IMR-90 (cell line): ENCODE measurements at regions of chr1 and their contacts with region 1.

Region 1: DNA sequence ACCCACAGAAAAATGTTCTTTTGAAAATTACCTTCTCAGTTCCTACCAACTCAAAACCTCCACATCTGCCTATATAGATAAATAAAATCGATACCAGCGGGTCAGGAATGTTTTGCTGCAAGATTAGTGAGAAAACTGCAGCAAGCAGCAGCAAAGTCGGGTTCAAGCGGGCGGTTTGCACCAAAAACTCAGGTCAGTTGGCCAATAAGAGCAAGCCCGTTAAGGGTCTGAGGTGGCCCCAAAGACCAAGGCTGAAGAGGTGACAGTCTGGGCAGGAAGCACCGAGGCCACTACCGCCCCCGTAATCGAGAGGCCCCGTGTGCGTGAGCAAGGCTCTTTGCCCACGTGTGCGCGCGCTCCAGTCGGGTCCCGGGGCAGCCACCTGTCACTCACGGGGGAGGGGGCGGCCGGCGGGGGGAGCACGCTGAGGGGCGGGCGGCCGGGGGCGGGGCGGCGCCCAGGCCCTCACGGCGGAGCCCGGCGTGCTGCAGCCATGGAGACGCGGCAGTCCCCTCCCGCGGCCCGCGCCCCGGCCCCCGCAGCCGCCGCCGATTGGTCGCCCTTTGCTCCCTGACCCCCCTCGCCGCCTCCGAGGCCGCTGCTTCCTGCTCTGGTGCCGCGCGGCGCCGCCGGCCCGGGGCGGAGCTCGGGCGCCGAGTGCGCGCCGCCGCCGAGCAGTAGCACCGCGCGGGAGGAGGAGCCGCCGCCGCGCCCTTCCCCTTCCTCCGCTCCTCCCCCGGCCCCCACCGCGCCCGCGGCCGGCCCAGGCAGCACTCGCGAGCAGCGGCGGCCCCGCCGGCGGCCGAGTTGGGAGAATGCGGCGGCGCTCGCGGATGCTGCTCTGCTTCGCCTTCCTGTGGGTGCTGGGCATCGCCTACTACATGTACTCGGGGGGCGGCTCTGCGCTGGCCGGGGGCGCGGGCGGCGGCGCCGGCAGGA is at the start of gene GALNT2:
- DNase-seq: peak; percentile 79
- ATAC-seq: peak; percentile 93
- H3K4me3 ChIP-seq: peak within 1 kb of the TSS; percentile 81
- H3K27ac ChIP-seq: peak within 1 kb of the TSS; percentile 78
- H3K4me1 ChIP-seq: peaks cover 7% of the 10 kb centered on the region
- H3K27me3 ChIP-seq: no peaks in the 10 kb centered on the region
- CTCF ChIP-seq: no peak
- POLR2A ChIP-seq: peak; percentile 87
- RAD21 ChIP-seq: peak; percentile 37
- total RNA-seq, gene GALNT2: 50.4 and 58.6 TPM in 2 replicates

Region 2: GRCh38 chr1:229558571-229559335 is 508.0 kb before region 1 on chr1 and contains the start of gene ABCB10:
- CTCF ChIA-PET with region 1: no interaction called
- POLR2A ChIA-PET with region 1: no interaction called
- dilution Hi-C with region 1: no loop called
- in situ Hi-C with region 1: no loop called
- intact Hi-C with region 1: loop called (anchors 2 kb)
- DNase-seq: peak; percentile 96
- ATAC-seq: peak; percentile 86
- H3K4me3 ChIP-seq: peak within 1 kb of the TSS; percentile 59
- H3K27ac ChIP-seq: peak within 1 kb of the TSS; percentile 65
- H3K4me1 ChIP-seq: peaks cover 11% of the 10 kb centered on the region
- H3K27me3 ChIP-seq: no peaks in the 10 kb centered on the region
- CTCF ChIP-seq: peak; percentile 86
- POLR2A ChIP-seq: no peak
- RAD21 ChIP-seq: peak; percentile 38
- total RNA-seq, gene ABCB10: 10.9 and 13.3 TPM in 2 replicates

Region 3: DNA sequence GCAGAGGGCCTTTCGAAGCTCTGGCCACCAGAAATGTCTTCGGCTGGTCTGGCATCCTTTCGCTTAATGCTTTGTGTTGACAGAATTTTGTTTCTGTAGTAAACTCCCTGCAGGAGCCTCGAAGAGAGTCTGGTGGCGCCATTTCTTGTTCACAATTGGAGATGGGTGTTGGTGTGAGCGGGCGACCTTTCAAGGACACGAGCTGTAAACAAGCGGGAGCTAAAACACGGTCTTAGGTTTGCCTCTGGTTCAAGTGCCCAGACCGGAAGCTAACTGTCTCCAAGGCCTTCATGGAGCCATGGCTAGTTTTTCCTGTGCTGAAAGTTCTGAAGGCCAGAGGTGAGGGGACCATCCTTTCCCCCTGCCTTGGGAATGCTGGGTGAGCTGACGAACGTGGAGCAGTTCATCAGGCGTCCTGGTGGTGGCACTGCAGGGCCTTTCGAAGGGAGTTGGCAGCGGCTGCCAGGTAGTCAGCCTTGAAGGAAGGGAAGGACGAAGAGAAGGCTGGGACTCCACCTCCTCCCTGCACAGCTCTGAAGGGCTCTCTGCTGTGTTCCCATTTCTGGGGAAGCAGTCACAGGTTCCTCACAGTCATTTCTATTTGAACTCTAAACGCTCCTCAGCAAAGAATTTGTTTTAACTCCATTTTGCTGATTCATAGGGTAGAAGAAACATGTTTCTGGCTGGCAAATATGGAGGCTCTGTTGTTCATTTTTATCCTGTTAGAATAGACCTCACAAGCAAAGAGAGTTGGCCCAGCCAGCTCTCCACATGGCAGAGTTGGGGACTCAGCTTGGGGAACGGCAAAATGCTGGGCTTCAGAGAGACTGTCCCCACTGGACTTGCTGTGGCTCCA is 405.5 kb before region 1 on chr1:
- CTCF ChIA-PET with region 1: no interaction called
- POLR2A ChIA-PET with region 1: no interaction called
- dilution Hi-C with region 1: no loop called
- in situ Hi-C with region 1: no loop called
- intact Hi-C with region 1: loop called (anchors 5 kb)
- DNase-seq: peak; percentile 65
- ATAC-seq: peak; percentile 92
- H3K4me3 ChIP-seq: no peak overlapping the region
- H3K27ac ChIP-seq: no peak overlapping the region
- H3K4me1 ChIP-seq: peaks cover 6% of the 10 kb centered on the region
- H3K27me3 ChIP-seq: no peaks in the 10 kb centered on the region
- CTCF ChIP-seq: peak; percentile 84
- POLR2A ChIP-seq: no peak
- RAD21 ChIP-seq: peak; percentile 85

Region 4: GRCh38 chr1:230104395-230105244 is 37.9 kb after region 1 on chr1:
- CTCF ChIA-PET with region 1: interaction called, 3 read pairs
- POLR2A ChIA-PET with region 1: no interaction called
- dilution Hi-C with region 1: no loop called
- in situ Hi-C with region 1: no loop called
- intact Hi-C with region 1: loop called (anchors 1 kb)
- DNase-seq: peak; percentile 100
- ATAC-seq: peak; percentile 79
- H3K4me3 ChIP-seq: no peak overlapping the region
- H3K27ac ChIP-seq: peak overlapping the region; percentile 77
- H3K4me1 ChIP-seq: peaks cover 40% of the 10 kb centered on the region
- H3K27me3 ChIP-seq: no peaks in the 10 kb centered on the region
- CTCF ChIP-seq: no peak
- POLR2A ChIP-seq: peak; percentile 68
- RAD21 ChIP-seq: no peak; the same call in 1 of the 2 replicates

Region 5: GRCh38 chr1:230167419-230167852 is 100.7 kb after region 1 on chr1:
- CTCF ChIA-PET with region 1: no interaction called
- POLR2A ChIA-PET with region 1: no interaction called
- dilution Hi-C with region 1: no loop called
- in situ Hi-C with region 1: no loop called
- intact Hi-C with region 1: loop called (anchors 2 kb)
- DNase-seq: peak; percentile 62
- ATAC-seq: no peak
- H3K4me3 ChIP-seq: no peak overlapping the region
- H3K27ac ChIP-seq: no peak overlapping the region
- H3K4me1 ChIP-seq: peaks cover 16% of the 10 kb centered on the region
- H3K27me3 ChIP-seq: no peaks in the 10 kb centered on the region
- CTCF ChIP-seq: peak; percentile 48
- POLR2A ChIP-seq: no peak
- RAD21 ChIP-seq: peak; percentile 67

Region 6: DNA sequence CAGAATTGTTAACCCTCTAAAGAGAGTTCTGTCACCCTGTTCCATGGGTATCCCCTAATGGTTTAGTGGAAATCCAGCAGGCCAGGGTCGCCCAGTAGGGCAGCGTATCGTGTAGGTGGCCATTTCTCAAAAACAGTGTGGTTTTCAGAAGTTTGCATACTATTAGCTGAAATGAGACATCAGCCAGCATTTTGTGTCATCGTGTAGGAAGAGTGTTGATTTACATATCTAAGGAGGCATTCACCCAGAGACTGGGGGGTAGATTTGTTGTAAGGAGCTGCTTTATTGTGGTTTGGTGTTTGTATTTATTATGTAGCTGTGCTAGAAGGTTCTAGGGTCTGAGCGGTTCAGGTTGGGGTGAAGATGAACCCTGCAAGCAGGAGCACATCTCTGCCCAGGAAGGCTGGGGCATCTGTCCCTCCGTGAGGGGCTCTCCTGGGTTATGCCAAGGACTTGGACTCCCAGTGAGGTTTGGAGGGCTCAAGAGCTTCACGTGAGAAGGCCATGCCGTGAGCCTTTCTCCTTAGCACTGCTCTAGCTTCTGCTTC is 185.0 kb after region 1 on chr1:
- CTCF ChIA-PET with region 1: no interaction called
- POLR2A ChIA-PET with region 1: no interaction called
- dilution Hi-C with region 1: no loop called
- in situ Hi-C with region 1: no loop called
- intact Hi-C with region 1: loop called (anchors 5 kb)
- DNase-seq: no peak
- ATAC-seq: no peak
- H3K4me3 ChIP-seq: no peak overlapping the region
- H3K27ac ChIP-seq: no peak overlapping the region
- H3K4me1 ChIP-seq: peaks cover 8% of the 10 kb centered on the region
- H3K27me3 ChIP-seq: no peaks in the 10 kb centered on the region
- CTCF ChIP-seq: no peak
- POLR2A ChIP-seq: no peak
- RAD21 ChIP-seq: no peak

Region 7: DNA sequence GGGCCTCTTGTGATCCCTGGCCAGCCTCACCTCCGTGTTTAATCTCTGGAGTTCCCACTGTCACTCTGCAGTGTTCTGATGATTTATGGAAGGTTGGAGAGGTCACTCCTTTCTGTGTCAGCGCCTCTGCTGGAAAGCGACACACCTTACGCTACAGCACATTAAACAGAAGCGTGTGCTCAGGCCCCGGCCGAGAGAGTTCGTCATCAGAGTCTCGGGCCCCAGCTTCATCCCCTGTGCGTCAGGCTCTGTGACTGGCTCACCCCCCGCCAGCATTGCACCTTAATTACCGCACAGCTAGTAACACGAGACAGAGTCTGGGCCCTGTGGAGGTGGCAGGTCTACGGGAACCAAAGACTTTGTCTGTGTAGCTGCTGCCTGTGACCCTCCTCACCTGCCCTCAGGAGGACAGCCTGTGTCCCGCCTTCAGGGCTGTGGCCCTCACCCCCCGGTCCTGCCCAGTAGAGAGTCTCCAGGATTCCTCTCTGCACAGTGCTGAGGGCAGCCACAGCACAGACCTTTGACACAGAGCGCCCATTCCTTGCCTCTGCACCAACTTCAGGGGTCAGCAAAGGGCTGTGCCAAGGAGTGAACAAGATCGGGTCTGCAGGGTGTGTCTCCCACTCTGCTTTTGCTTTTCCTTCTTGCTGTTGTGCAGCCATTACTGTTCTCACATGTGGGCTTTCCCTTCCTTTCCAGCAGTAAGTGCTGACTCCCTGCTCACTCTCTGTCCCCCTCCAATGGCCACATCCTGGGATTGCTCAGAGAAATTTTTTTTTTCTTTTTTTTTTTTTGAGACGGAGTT is 201.8 kb after region 1 on chr1:
- CTCF ChIA-PET with region 1: interaction called, 5 read pairs
- POLR2A ChIA-PET with region 1: no interaction called
- dilution Hi-C with region 1: no loop called
- in situ Hi-C with region 1: no loop called
- intact Hi-C with region 1: loop called (anchors 1 kb)
- DNase-seq: peak; percentile 75
- ATAC-seq: peak; percentile 98
- H3K4me3 ChIP-seq: no peak overlapping the region
- H3K27ac ChIP-seq: no peak overlapping the region
- H3K4me1 ChIP-seq: peaks cover 3% of the 10 kb centered on the region; the same call in 1 of the 2 replicates
- H3K27me3 ChIP-seq: no peaks in the 10 kb centered on the region
- CTCF ChIP-seq: peak; percentile 84
- POLR2A ChIP-seq: no peak
- RAD21 ChIP-seq: peak; percentile 85